SK-MEL-5 (cell line): ENCODE measurements at regions of chr1 and their contacts with region 1.

Region 1: DNA sequence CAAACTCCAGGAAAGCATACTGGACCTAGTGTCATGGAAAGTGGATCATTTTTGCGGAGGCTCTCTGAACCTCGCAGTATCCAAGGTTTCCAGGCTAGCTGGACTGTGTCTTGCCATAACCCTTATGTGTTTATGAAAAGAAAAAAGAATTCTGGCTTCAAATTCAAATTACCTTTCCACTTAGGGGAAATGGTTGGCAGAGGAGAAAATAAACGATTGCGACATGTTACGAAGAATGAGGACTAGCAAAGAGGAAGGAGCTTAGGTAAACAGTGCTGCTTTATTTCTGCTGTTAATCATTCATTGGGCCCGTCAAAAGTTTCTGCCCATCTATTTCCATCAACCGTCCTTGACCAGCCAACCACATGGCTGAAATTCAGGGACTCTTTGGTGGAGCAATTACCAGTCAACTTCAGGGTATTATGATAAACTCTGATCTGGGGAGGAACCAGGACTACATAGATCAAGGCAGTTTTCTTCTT is at the start of gene C4BPA:
- DNase-seq: no peak
- total RNA-seq, gene C4BPA: not detected in 2 replicates

Region 2: DNA sequence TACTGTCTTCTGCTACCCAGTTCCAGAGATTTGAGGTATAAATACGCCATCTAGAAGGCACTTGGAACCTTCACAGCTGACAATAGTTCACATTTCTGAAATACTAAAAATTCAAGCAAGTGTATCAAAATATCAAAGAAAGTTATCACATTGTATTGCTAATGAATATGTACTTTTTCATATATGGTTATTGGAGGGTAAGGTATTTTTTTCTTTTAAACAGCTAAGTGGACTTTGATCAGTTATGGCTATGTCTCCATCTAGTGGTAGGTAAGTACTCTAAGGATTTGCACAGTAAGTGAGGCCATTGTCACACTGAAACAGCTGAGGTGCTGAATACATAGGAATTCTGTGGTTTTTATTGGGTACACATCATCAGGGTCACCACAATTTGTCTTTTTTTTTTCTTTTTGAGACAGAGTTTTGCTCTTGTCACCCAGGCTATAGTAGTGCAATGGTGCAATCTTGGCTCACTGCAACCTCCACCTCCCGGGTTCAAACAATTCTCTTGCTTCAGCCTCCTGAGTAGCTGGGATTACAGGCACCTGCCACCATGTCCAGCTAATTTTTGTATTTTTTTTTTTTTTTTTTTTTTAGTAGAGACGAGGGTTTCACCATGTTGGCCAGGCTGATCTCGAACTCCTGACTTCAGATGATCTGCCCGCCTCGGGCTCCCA is 301.1 kb after region 1 on chr1:
- in situ Hi-C with region 1: loop called (anchors 10 kb)
- DNase-seq: peak; percentile 78